WTC11 (cell line): ENCODE measurements at regions of chr17 and their contacts with region 1.

Region 1: GRCh38 chr17:57833179-57833939 is 16.5 kb downstream of the MRPS23 start:
- DNase-seq: peak; percentile 69
- ATAC-seq: peak; percentile 81
- H3K4me3 Mint-ChIP-seq: no peak overlapping the region
- H3K27ac Mint-ChIP-seq: no peak overlapping the region
- H3K4me1 Mint-ChIP-seq: peaks cover 16% of the 10 kb centered on the region
- H3K27me3 Mint-ChIP-seq: no peaks in the 10 kb centered on the region
- CTCF ChIP-seq: peak; percentile 91

Region 2: GRCh38 chr17:57707851-57708291 is 125.5 kb before region 1 on chr17:
- CTCF ChIA-PET with region 1: interaction called, 12 read pairs
- POLR2A ChIA-PET with region 1: no interaction called
- DNase-seq: peak; percentile 39
- ATAC-seq: peak; percentile 90
- H3K4me3 Mint-ChIP-seq: peak overlapping the region; percentile 46
- H3K27ac Mint-ChIP-seq: no peak overlapping the region
- H3K4me1 Mint-ChIP-seq: peaks cover 19% of the 10 kb centered on the region
- H3K27me3 Mint-ChIP-seq: peaks cover 14% of the 10 kb centered on the region
- CTCF ChIP-seq: no peak

Region 3: GRCh38 chr17:57747221-57748017 is 85.9 kb before region 1 on chr17:
- CTCF ChIA-PET with region 1: interaction called, 23 read pairs
- POLR2A ChIA-PET with region 1: no interaction called
- DNase-seq: no peak
- ATAC-seq: peak; percentile 79
- H3K4me3 Mint-ChIP-seq: no peak overlapping the region
- H3K27ac Mint-ChIP-seq: no peak overlapping the region
- H3K4me1 Mint-ChIP-seq: peaks cover 4% of the 10 kb centered on the region
- H3K27me3 Mint-ChIP-seq: no peaks in the 10 kb centered on the region; the same call in 1 of the 2 replicates
- CTCF ChIP-seq: peak; percentile 43

Region 4: GRCh38 chr17:57810721-57811637 is 22.4 kb before region 1 on chr17:
- CTCF ChIA-PET with region 1: interaction called, 37 read pairs
- POLR2A ChIA-PET with region 1: no interaction called
- DNase-seq: no peak
- ATAC-seq: peak; percentile 41
- H3K4me3 Mint-ChIP-seq: no peak overlapping the region
- H3K27ac Mint-ChIP-seq: no peak overlapping the region
- H3K4me1 Mint-ChIP-seq: peaks cover 16% of the 10 kb centered on the region
- H3K27me3 Mint-ChIP-seq: peaks cover 5% of the 10 kb centered on the region
- CTCF ChIP-seq: no peak

Region 5: GRCh38 chr17:57955183-57955931 is 122.0 kb after region 1 on chr17 and contains the start of gene CUEDC1:
- CTCF ChIA-PET with region 1: interaction called, 17 read pairs
- POLR2A ChIA-PET with region 1: no interaction called
- DNase-seq: peak; percentile 74
- ATAC-seq: peak; percentile 61
- H3K4me3 Mint-ChIP-seq: peak within 1 kb of the TSS; percentile 74
- H3K27ac Mint-ChIP-seq: 0 out of 2 replicates have a peak within 1 kb of the TSS, but pooled peaks have one; percentile 6
- H3K4me1 Mint-ChIP-seq: peaks cover 53% of the 10 kb centered on the region
- H3K27me3 Mint-ChIP-seq: peaks cover 48% of the 10 kb centered on the region
- CTCF ChIP-seq: no peak
- total RNA-seq, gene CUEDC1: 6.5 to 12.2 TPM (median 9.4 TPM) in 3 replicates

Region 6: DNA sequence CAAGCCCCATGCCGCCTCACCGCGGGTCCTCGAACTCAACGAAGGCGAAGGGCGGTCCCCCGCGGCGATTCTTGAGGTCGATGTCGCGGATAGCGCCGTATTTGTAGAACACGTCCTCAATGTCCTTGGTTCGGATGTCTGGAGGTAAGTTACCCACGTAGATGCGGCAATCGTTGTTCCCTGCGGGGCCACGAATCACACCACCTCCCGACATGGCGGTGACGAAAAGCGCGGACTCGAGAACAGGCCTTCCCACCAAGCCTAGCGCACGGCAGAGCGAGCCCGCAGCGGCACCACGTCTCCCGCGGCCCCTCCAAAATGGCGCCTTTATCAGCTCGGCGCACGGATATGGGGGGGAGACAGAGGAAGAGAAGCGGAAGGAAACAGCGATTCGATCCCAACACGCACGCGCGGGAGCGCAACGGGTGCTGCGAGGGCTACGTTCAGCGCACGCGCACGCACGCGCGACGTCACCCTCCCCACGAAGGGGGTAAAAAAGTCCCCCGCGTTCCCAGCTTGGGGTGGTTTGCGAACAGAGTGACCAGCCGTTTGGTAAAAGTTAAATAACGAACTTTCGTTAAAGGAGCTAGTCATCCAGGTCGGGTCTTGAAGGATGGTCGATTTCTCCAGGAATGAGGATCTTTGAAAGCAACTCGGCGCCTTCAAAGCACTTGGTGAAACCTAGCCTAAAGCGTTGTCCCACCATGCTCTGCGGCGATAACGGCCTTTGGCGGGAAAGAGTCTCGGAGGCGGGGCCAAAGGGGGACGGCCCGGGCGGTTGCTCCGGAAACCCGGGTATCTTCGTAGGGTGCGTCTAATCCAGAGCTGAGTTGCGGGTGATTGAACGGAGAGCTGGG is 173.8 kb after region 1 on chr17 and contains the start of gene SRSF1:
- CTCF ChIA-PET with region 1: interaction called, 12 read pairs
- POLR2A ChIA-PET with region 1: no interaction called
- DNase-seq: peak; percentile 96
- ATAC-seq: peak; percentile 91
- H3K4me3 Mint-ChIP-seq: peak within 1 kb of the TSS; percentile 100
- H3K27ac Mint-ChIP-seq: peak within 1 kb of the TSS; percentile 100
- H3K4me1 Mint-ChIP-seq: peaks cover 47% of the 10 kb centered on the region
- H3K27me3 Mint-ChIP-seq: no peaks in the 10 kb centered on the region
- CTCF ChIP-seq: no peak
- total RNA-seq, gene SRSF1: 349 to 387 TPM (median 366 TPM) in 3 replicates